GM10248 (cell line): ENCODE measurements at regions of chr5 and their contacts with region 1.

Region 1: GRCh38 chr5:170293273-170293672 is 4.3 kb downstream of the LCP2 start:
- DNase-seq: peak; percentile 71
- CTCF ChIP-seq: peak; percentile 8

Region 2: DNA sequence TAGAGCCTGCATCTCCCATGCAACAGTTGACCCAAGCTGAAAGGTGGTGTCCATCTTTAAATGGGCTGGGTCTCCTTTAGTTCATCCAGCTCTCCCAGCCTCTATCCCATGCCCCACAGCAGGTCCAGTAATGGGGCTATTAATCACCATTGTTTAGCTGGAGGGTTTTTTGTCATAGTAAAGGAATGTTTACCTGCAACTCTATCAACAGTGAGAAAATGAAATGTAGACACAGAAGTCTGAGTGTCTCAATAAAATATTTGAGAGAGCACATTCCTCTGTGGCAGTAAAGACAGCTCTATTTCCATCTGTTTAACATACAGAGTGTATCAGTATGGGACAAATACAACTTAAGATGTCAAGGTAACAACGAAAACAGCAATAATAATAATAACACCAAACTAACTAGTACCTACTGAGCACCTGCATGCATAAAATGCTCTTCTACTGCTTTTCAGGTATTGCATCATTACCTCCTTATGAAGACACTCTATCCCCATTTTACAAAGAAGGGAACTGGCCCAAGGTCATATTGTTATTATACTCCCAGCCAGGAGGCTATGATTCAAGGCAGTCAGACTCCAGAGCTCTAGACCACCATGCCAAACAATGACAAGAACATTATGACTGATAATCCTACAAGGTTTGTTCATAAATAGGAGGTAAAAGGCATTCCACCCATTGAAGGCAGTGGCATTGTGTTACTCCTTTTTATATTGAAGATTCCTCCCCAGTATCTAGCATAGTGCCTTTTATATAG is 81.5 kb before region 1 on chr5:
- CTCF ChIA-PET with region 1: no interaction called
- POLR2A ChIA-PET with region 1: no interaction called
- DNase-seq: no peak
- CTCF ChIP-seq: no peak

Region 3: DNA sequence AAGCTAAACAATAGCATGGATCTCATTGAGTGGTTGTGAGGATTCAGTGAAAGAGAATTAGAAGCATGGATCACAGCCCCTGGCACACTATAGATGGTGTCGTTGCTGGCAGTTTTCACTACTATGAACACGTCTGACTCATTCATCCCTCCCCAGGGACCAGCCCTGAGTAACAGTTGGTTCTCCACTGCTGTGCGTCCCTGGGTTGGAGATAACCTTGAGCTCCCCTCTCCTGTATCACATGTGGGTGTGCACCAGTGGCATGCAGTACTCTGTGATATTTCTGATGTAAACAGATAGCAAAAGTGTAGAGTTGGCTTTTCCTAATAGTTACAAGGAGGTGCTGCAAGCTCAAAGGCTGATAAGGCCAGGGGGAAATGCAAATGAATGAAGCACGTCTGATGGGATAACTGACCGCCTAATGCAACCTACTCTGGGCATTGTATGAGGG is 13.1 kb after region 1 on chr5:
- CTCF ChIA-PET with region 1: interaction called, 11 read pairs
- POLR2A ChIA-PET with region 1: interaction called, 3 read pairs
- DNase-seq: no peak
- CTCF ChIP-seq: no peak

Region 4: DNA sequence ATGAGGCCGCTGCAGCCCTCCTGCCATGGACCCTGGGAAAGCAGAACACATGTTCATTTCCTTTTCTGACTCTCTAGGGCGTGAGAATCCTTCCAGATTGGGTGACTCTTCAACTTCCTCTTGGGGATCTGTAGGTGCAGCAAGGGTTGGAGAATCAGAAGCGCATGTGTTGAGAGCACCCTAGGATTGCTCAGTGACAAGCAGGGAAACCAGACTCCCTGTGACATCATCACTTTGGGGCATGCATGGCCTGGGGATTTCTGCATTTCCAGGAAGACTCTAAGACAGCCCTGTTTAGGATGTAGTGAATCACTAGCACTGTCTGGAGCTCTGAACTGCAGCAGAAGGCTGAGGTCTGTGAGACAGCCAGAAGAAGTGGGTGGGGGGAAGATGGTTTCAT is 19.4 kb after region 1 on chr5:
- CTCF ChIA-PET with region 1: interaction called, 10 read pairs
- POLR2A ChIA-PET with region 1: no interaction called
- DNase-seq: no peak
- CTCF ChIP-seq: no peak

Region 5: DNA sequence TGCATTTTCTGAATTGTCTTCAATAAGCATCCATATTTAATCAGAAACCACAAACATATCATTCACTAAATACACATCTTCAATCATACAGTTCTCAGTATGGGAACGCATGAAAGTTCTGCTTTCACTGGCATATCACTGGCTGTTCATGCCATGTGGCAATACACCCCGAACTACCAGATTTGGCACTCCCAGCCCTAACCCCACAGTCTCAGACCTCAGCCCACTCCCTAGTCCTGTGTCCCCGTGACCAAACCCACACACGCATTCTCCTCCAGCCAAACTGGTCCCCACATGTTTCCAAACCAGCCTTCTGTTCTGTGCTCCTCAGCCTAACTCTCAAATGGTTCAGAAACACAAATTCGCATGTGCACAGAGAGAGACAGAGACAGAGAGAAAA is 75.3 kb after region 1 on chr5:
- CTCF ChIA-PET with region 1: no interaction called
- POLR2A ChIA-PET with region 1: no interaction called
- DNase-seq: no peak
- CTCF ChIP-seq: no peak

Region 6: GRCh38 chr5:170444969-170445505 is 151.8 kb after region 1 on chr5:
- CTCF ChIA-PET with region 1: no interaction called
- POLR2A ChIA-PET with region 1: no interaction called
- DNase-seq: no peak
- CTCF ChIP-seq: no peak